Endothelial cell of umbilical vein (primary cell): ENCODE measurements at regions of chr1 and their contacts with region 1.

Region 1: GRCh38 chr1:246012341-246012740 is 494.7 kb downstream of the SMYD3 start:
- DNase-seq: peak; percentile 63
- H3K4me3 ChIP-seq: no peak overlapping the region
- H3K27ac ChIP-seq: no peak overlapping the region
- H3K4me1 ChIP-seq: no peaks in the 10 kb centered on the region
- H3K27me3 ChIP-seq: no peaks in the 10 kb centered on the region
- CTCF ChIP-seq: peak; percentile 48 to 54
- POLR2A ChIP-seq: no peak

Region 2: GRCh38 chr1:245986404-245987220 is 25.7 kb before region 1 on chr1:
- CTCF ChIA-PET with region 1: no interaction called
- POLR2A ChIA-PET with region 1: no interaction called
- dilution Hi-C with region 1: no loop called
- intact Hi-C with region 1: no loop called
- DNase-seq: peak; percentile 86
- H3K4me3 ChIP-seq: no peak overlapping the region
- H3K27ac ChIP-seq: peak overlapping the region; percentile 35
- H3K4me1 ChIP-seq: peaks cover 12% of the 10 kb centered on the region
- H3K27me3 ChIP-seq: no peaks in the 10 kb centered on the region
- CTCF ChIP-seq: no peak
- POLR2A ChIP-seq: no peak

Region 3: GRCh38 chr1:246029616-246030015 is 17.3 kb after region 1 on chr1:
- CTCF ChIA-PET with region 1: no interaction called
- POLR2A ChIA-PET with region 1: no interaction called
- dilution Hi-C with region 1: no loop called
- intact Hi-C with region 1: no loop called
- DNase-seq: no peak
- H3K4me3 ChIP-seq: no peak overlapping the region
- H3K27ac ChIP-seq: no peak overlapping the region
- H3K4me1 ChIP-seq: no peaks in the 10 kb centered on the region
- H3K27me3 ChIP-seq: no peaks in the 10 kb centered on the region
- CTCF ChIP-seq: no peak
- POLR2A ChIP-seq: no peak

Region 4: GRCh38 chr1:246117066-246117791 is 104.9 kb after region 1 on chr1:
- CTCF ChIA-PET with region 1: interaction called, 3 read pairs
- POLR2A ChIA-PET with region 1: no interaction called
- dilution Hi-C with region 1: no loop called
- intact Hi-C with region 1: loop called (anchors 1 kb)
- DNase-seq: peak; percentile 70
- H3K4me3 ChIP-seq: no peak overlapping the region
- H3K27ac ChIP-seq: no peak overlapping the region
- H3K4me1 ChIP-seq: peaks cover 7% of the 10 kb centered on the region
- H3K27me3 ChIP-seq: no peaks in the 10 kb centered on the region
- CTCF ChIP-seq: peak; percentile 17 to 46
- POLR2A ChIP-seq: no peak

Region 5: GRCh38 chr1:246246430-246246829 is 234.1 kb after region 1 on chr1:
- CTCF ChIA-PET with region 1: interaction called, 7 read pairs
- POLR2A ChIA-PET with region 1: no interaction called
- dilution Hi-C with region 1: no loop called
- intact Hi-C with region 1: loop called (anchors 1 kb)
- DNase-seq: peak; percentile 15
- H3K4me3 ChIP-seq: no peak overlapping the region
- H3K27ac ChIP-seq: no peak overlapping the region
- H3K4me1 ChIP-seq: peaks cover 5% of the 10 kb centered on the region
- H3K27me3 ChIP-seq: no peaks in the 10 kb centered on the region
- CTCF ChIP-seq: no peak
- POLR2A ChIP-seq: no peak

Region 6: DNA sequence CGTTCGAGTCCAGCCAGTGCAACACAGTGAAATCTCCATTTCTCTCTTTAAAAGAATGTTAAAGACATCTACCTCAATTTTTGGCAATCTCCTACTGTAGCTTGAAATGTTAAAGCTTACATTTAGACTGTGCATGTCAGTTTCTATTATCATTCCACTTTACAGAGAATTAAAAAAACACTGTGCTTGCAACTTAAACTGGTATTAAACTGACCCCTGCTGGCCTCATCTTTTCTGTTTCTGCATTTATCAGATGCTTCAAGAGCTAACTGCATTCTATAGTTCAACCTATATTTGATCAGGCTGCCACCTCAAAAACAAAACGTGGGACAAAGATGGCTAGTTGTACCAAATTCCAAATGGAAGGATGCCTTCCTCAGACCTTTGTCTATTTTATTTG is 268.2 kb after region 1 on chr1:
- CTCF ChIA-PET with region 1: interaction called, 33 read pairs
- POLR2A ChIA-PET with region 1: no interaction called
- dilution Hi-C with region 1: no loop called
- intact Hi-C with region 1: loop called (anchors 1 kb)
- DNase-seq: peak; percentile 36
- H3K4me3 ChIP-seq: no peak overlapping the region
- H3K27ac ChIP-seq: no peak overlapping the region
- H3K4me1 ChIP-seq: no peaks in the 10 kb centered on the region
- H3K27me3 ChIP-seq: no peaks in the 10 kb centered on the region
- CTCF ChIP-seq: no peak
- POLR2A ChIP-seq: no peak

Region 7: DNA sequence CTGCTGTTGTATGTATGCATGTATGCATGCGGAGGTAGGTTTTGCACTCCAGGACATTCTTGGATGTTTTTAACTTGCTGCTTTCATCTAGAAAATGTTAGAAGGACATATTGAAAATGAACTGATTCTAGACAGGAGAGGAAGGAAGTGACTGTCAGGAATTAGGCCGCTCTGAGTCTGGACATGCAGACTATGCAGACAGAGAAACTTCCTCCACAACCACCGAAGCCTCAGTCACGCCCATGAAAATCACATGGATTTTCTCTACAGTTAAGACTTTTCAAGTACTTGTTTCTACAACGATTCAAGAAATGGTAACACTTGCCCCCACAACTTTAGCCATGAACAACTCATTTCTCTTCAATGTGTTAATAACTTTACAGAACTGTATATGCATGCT is 283.6 kb after region 1 on chr1:
- CTCF ChIA-PET with region 1: interaction called, 7 read pairs
- POLR2A ChIA-PET with region 1: no interaction called
- dilution Hi-C with region 1: no loop called
- intact Hi-C with region 1: loop called (anchors 5 kb)
- DNase-seq: peak; percentile 53
- H3K4me3 ChIP-seq: no peak overlapping the region
- H3K27ac ChIP-seq: peak overlapping the region; percentile 78
- H3K4me1 ChIP-seq: peaks cover 43% of the 10 kb centered on the region
- H3K27me3 ChIP-seq: no peaks in the 10 kb centered on the region
- CTCF ChIP-seq: no peak
- POLR2A ChIP-seq: no peak

Region 8: GRCh38 chr1:246450611-246451251 is 438.4 kb after region 1 on chr1:
- CTCF ChIA-PET with region 1: interaction called, 14 read pairs
- POLR2A ChIA-PET with region 1: no interaction called
- dilution Hi-C with region 1: no loop called
- intact Hi-C with region 1: loop called (anchors 1 kb)
- DNase-seq: peak; percentile 53
- H3K4me3 ChIP-seq: no peak overlapping the region
- H3K27ac ChIP-seq: no peak overlapping the region
- H3K4me1 ChIP-seq: no peaks in the 10 kb centered on the region
- H3K27me3 ChIP-seq: no peaks in the 10 kb centered on the region
- CTCF ChIP-seq: peak; percentile 34 to 42
- POLR2A ChIP-seq: no peak

Region 9: GRCh38 chr1:246699095-246699735 is 686.9 kb after region 1 on chr1:
- CTCF ChIA-PET with region 1: no interaction called
- POLR2A ChIA-PET with region 1: no interaction called
- dilution Hi-C with region 1: no loop called
- intact Hi-C with region 1: loop called (anchors 5 kb)
- DNase-seq: peak; percentile 93
- H3K4me3 ChIP-seq: no peak overlapping the region
- H3K27ac ChIP-seq: peak overlapping the region; percentile 53
- H3K4me1 ChIP-seq: peaks cover 5% of the 10 kb centered on the region
- H3K27me3 ChIP-seq: no peaks in the 10 kb centered on the region
- CTCF ChIP-seq: peak; percentile 91 to 92
- POLR2A ChIP-seq: no peak